ENCODE measurements at regions of chr14 and their contacts with region 1.

Region 1: GRCh38 chr14:81193924-81194633 is 26.7 kb downstream of the GTF2A1 start:
- DNase-seq: peak; percentile 51
- ATAC-seq: peak; percentile 78
- H3K4me3 Mint-ChIP-seq: no peak overlapping the region
- H3K27ac Mint-ChIP-seq: no peak overlapping the region
- H3K4me1 Mint-ChIP-seq: peaks cover 44% of the 10 kb centered on the region
- H3K27me3 Mint-ChIP-seq: no peaks in the 10 kb centered on the region

Region 2: DNA sequence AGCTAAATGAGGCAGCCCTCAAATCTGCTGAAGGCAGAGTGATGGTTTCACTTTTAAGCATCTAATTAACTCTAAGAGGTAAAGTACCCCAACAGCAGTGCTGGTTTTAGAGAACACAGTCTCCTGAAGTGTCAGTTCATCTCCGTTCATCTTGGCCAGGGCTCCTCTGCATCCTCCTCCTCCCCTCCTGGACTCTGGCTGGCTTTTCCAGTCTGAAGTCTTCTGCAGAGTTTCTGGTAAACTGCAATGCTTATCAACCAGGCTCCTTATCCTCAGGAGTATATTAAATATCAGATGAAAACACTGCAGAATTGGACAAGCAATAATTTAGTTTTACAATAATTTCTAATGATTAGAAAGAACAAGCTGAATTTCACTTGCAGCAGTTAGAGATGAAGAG is 88.7 kb before region 1 on chr14:
- CTCF ChIA-PET with region 1: no interaction called
- POLR2A ChIA-PET with region 1: interaction called, 13 read pairs
- intact Hi-C with region 1: no loop called
- DNase-seq: no peak
- ATAC-seq: no peak
- H3K4me3 Mint-ChIP-seq: no peak overlapping the region
- H3K27ac Mint-ChIP-seq: no peak overlapping the region
- H3K4me1 Mint-ChIP-seq: no peaks in the 10 kb centered on the region
- H3K27me3 Mint-ChIP-seq: no peaks in the 10 kb centered on the region

Region 3: GRCh38 chr14:81206115-81206514 is 12.0 kb after region 1 on chr14:
- CTCF ChIA-PET with region 1: no interaction called
- POLR2A ChIA-PET with region 1: no interaction called
- intact Hi-C with region 1: no loop called
- DNase-seq: peak; percentile 11
- ATAC-seq: peak; percentile 92
- H3K4me3 Mint-ChIP-seq: no peak overlapping the region
- H3K27ac Mint-ChIP-seq: peak overlapping the region; percentile 51
- H3K4me1 Mint-ChIP-seq: peaks cover 28% of the 10 kb centered on the region
- H3K27me3 Mint-ChIP-seq: no peaks in the 10 kb centered on the region